Activated B cell treated with CpG ODN at 0.5 μM for 24 hours (primary cell): ENCODE measurements at regions of chr17 and their contacts with region 1.

Region 1: GRCh38 chr17:67689534-67690177 is 28.1 kb upstream of the NOL11 start:
- DNase-seq: no peak
- ATAC-seq: peak; percentile 68
- H3K4me3 Mint-ChIP-seq: no peak overlapping the region
- H3K27ac Mint-ChIP-seq: no peak overlapping the region
- H3K4me1 Mint-ChIP-seq: peaks cover 4% of the 10 kb centered on the region
- H3K27me3 Mint-ChIP-seq: no peaks in the 10 kb centered on the region
- CTCF ChIP-seq: no peak

Region 2: DNA sequence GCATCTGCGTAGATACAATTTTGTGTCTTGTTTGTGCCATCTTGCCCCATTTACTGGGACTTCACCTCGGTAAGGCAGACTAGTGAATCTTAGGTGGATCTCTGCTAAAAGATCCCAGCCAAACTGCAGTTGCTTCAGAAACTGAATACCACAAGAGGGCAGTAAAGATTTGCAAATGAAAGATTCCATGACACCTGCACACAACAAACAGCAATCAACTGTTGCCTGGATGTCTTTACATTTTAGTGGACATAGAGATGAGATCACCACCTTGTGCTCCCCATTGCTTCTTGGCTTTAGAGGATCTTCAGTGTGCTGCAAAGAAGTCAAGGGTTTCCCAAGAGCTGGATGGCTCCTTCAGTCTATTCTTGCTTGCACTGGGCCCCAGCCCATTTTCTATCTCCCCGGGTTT is 973.9 kb before region 1 on chr17:
- CTCF ChIA-PET with region 1: no interaction called
- POLR2A ChIA-PET with region 1: no interaction called
- intact Hi-C with region 1: loop called (anchors 5 kb)
- DNase-seq: no peak
- ATAC-seq: no peak
- H3K4me3 Mint-ChIP-seq: no peak overlapping the region
- H3K27ac Mint-ChIP-seq: no peak overlapping the region
- H3K4me1 Mint-ChIP-seq: no peaks in the 10 kb centered on the region
- H3K27me3 Mint-ChIP-seq: peaks cover 10% of the 10 kb centered on the region
- CTCF ChIP-seq: no peak

Region 3: GRCh38 chr17:67475236-67475937 is 214.3 kb before region 1 on chr17:
- CTCF ChIA-PET with region 1: interaction called, 4 read pairs
- POLR2A ChIA-PET with region 1: no interaction called
- intact Hi-C with region 1: loop called (anchors 1 kb)
- DNase-seq: peak; percentile 50
- ATAC-seq: peak; percentile 99
- H3K4me3 Mint-ChIP-seq: peak overlapping the region; percentile 48
- H3K27ac Mint-ChIP-seq: peak overlapping the region; percentile 36
- H3K4me1 Mint-ChIP-seq: peaks cover 10% of the 10 kb centered on the region
- H3K27me3 Mint-ChIP-seq: no peaks in the 10 kb centered on the region
- CTCF ChIP-seq: no peak

Region 4: DNA sequence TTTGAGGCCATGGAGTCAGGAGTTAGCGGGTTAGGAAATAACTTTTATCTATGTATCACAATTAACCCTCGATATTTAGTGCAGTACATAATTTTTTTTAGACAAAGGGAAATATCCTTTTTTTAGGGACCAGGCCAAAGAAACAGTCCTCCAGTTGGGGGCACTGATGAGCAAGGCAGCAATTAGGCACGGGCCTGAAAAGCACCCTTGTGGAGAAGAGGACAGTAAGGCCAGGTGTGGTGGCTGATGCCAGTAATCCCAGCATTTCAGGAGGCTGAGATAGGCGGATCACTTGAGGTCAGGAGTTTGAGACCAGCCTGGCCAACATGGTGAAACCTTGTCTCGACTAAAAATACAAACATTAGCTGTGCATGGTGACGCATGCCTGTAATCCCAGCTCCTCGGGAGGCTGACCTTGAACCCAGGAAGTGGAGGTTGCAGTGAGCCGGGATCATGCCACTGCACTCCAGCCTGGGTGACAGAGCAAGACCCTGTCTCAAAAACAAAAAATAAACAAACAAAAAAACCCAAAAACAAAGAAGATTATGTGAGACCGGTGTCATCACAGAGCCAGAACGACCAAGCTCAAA is 130.2 kb before region 1 on chr17:
- CTCF ChIA-PET with region 1: interaction called, 7 read pairs
- POLR2A ChIA-PET with region 1: interaction called, 3 read pairs
- intact Hi-C with region 1: loop called (anchors 1 kb)
- DNase-seq: no peak
- ATAC-seq: no peak
- H3K4me3 Mint-ChIP-seq: no peak overlapping the region
- H3K27ac Mint-ChIP-seq: no peak overlapping the region
- H3K4me1 Mint-ChIP-seq: no peaks in the 10 kb centered on the region
- H3K27me3 Mint-ChIP-seq: no peaks in the 10 kb centered on the region
- CTCF ChIP-seq: no peak

Region 5: GRCh38 chr17:67575325-67575724 is 114.3 kb before region 1 on chr17:
- CTCF ChIA-PET with region 1: no interaction called
- POLR2A ChIA-PET with region 1: interaction called, 4 read pairs
- intact Hi-C with region 1: loop called (anchors 5 kb)
- DNase-seq: no peak
- ATAC-seq: peak; percentile 23
- H3K4me3 Mint-ChIP-seq: peak overlapping the region; percentile 64
- H3K27ac Mint-ChIP-seq: peak overlapping the region; percentile 80
- H3K4me1 Mint-ChIP-seq: peaks cover 73% of the 10 kb centered on the region
- H3K27me3 Mint-ChIP-seq: no peaks in the 10 kb centered on the region
- CTCF ChIP-seq: no peak